CD14-positive monocyte (primary cell): ENCODE measurements at regions of chr3 and their contacts with region 1.

Region 1: GRCh38 chr3:101724329-101725193 is at the start of gene CEP97:
- DNase-seq: peak; percentile 81 to 92 (median 88)
- H3K4me3 ChIP-seq: peak within 1 kb of the TSS; percentile 63 to 99 (median 98)
- H3K4me3 Mint-ChIP-seq: peak within 1 kb of the TSS; percentile 98 to 99
- H3K27ac ChIP-seq: peak within 1 kb of the TSS; percentile 32 to 91
- H3K27ac Mint-ChIP-seq: peak within 1 kb of the TSS; percentile 90 to 97 (median 95)
- H3K4me1 ChIP-seq: peaks cover 46 to 50% of the 10 kb centered on the region in 2 donors
- H3K4me1 Mint-ChIP-seq: peaks cover 42% of the 10 kb centered on the region
- H3K27me3 ChIP-seq: no peaks in the 10 kb centered on the region
- H3K27me3 Mint-ChIP-seq: peaks cover 0 to 2% (median 0%) of the 10 kb centered on the region in 3 donors
- CTCF ChIP-seq: no peak
- polyA plus RNA-seq, gene CEP97: 0.79 to 1.7 (median 1.5) TPM

Region 2: GRCh38 chr3:101685870-101686412 is 38.6 kb before region 1 on chr3:
- intact Hi-C with region 1: loop called (anchors 2 to 5 kb)
- DNase-seq: no peak
- H3K4me3 ChIP-seq: peak overlapping the region; percentile 86 to 98 (median 95)
- H3K4me3 Mint-ChIP-seq: peak overlapping the region; percentile 99
- H3K27ac ChIP-seq: peak overlapping the region; percentile 85 to 95
- H3K27ac Mint-ChIP-seq: peak overlapping the region; percentile 97 to 99 (median 99)
- H3K4me1 ChIP-seq: peaks cover 50 to 56% of the 10 kb centered on the region in 2 donors
- H3K4me1 Mint-ChIP-seq: peaks cover 47% of the 10 kb centered on the region
- H3K27me3 ChIP-seq: no peaks in the 10 kb centered on the region
- H3K27me3 Mint-ChIP-seq: peaks cover 0 to 2% (median 0%) of the 10 kb centered on the region in 3 donors
- CTCF ChIP-seq: no peak

Region 3: DNA sequence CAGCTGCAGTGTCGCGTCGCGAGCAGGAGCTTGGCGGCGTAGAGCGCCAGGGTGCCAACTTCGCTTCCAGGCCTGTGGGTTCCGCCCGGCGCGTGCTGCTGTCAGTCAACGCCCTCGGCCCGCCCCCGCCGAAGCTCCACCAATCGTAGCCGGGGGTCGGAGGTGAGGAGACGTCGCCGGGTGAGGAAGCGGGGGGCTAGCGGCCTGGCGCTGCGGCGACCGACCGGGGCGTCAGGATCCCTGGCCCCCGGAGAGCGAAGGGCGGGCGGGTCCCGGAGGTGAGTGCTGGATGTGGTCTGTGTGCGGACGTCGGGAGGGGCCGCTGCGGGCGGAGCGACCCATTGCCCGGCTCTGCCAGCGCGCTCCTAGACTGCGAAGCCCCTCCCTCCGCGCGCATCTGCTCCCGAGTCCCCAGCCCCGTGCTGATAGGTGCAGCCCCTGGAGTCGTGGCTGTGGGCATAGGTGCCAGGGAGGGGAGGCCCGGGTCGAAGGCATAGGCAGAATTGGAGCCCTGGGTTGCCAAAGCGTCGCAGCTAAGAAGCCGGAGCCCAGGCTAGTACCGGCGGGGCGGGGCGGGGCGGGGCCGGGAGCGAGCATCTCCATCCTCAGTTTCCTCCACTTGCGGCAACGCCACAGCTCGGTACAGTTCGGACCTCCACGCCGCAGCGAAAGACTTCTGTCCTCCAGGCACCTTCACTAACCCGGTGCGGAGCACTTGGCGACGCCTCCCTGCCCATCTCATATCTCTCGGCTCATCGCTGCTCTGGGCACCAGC is 54.7 kb after region 1 on chr3 and contains the start of gene NXPE3:
- intact Hi-C with region 1: loop called in 1 of 2 experiments (anchors 5 kb)
- DNase-seq: peak; percentile 73 to 80 (median 80)
- H3K4me3 ChIP-seq: peak within 1 kb of the TSS; percentile 78 to 94 (median 93)
- H3K4me3 Mint-ChIP-seq: peak within 1 kb of the TSS; percentile 89 to 94
- H3K27ac ChIP-seq: peak within 1 kb of the TSS; percentile 41 to 91
- H3K27ac Mint-ChIP-seq: peak within 1 kb of the TSS; percentile 83 to 93 (median 91)
- H3K4me1 ChIP-seq: peaks cover 40 to 42% of the 10 kb centered on the region in 2 donors
- H3K4me1 Mint-ChIP-seq: peaks cover 46% of the 10 kb centered on the region
- H3K27me3 ChIP-seq: no peaks in the 10 kb centered on the region
- H3K27me3 Mint-ChIP-seq: peaks cover 0 to 3% (median 0%) of the 10 kb centered on the region in 3 donors
- CTCF ChIP-seq: no peak
- polyA plus RNA-seq, gene NXPE3: 14.6 to 35.8 (median 19.8) TPM